ENCODE measurements at regions of chr5 and their contacts with region 1.

Region 1: GRCh38 chr5:123807177-123807945 is 295.4 kb downstream of the CSNK1G3 start:
- DNase-seq: no peak
- ATAC-seq: no peak
- H3K4me3 ChIP-seq: no peak overlapping the region
- H3K4me3 Mint-ChIP-seq: no peak overlapping the region
- H3K27ac ChIP-seq: no peak overlapping the region
- H3K27ac Mint-ChIP-seq: no peak overlapping the region
- H3K4me1 ChIP-seq: no peaks in the 10 kb centered on the region
- H3K4me1 Mint-ChIP-seq: no peaks in the 10 kb centered on the region
- H3K27me3 ChIP-seq: no peaks in the 10 kb centered on the region
- H3K27me3 Mint-ChIP-seq: no peaks in the 10 kb centered on the region
- CTCF ChIP-seq: no peak

Region 2: GRCh38 chr5:122385808-122386207 is 1421.6 kb before region 1 on chr5:
- CTCF ChIA-PET with region 1: no interaction called
- POLR2A ChIA-PET with region 1: no interaction called
- intact Hi-C with region 1: loop called in 1 of 2 experiments (anchors 10 kb)
- DNase-seq: no peak
- ATAC-seq: no peak
- H3K4me3 ChIP-seq: no peak overlapping the region
- H3K4me3 Mint-ChIP-seq: no peak overlapping the region
- H3K27ac ChIP-seq: no peak overlapping the region
- H3K27ac Mint-ChIP-seq: no peak overlapping the region
- H3K4me1 ChIP-seq: no peaks in the 10 kb centered on the region
- H3K4me1 Mint-ChIP-seq: no peaks in the 10 kb centered on the region
- H3K27me3 ChIP-seq: no peaks in the 10 kb centered on the region
- H3K27me3 Mint-ChIP-seq: no peaks in the 10 kb centered on the region
- CTCF ChIP-seq: no peak

Region 3: GRCh38 chr5:123511648-123512605 is 295.4 kb before region 1 on chr5 and contains the start of gene CSNK1G3:
- CTCF ChIA-PET with region 1: no interaction called
- POLR2A ChIA-PET with region 1: no interaction called
- intact Hi-C with region 1: no loop called
- DNase-seq: peak; percentile 80 to 96 (median 91)
- ATAC-seq: peak; percentile 80
- H3K4me3 ChIP-seq: peak within 1 kb of the TSS; percentile 89 to 93
- H3K4me3 Mint-ChIP-seq: peak within 1 kb of the TSS; percentile 99
- H3K27ac ChIP-seq: peak within 1 kb of the TSS; percentile 77 to 87
- H3K27ac Mint-ChIP-seq: peak within 1 kb of the TSS; percentile 98
- H3K4me1 ChIP-seq: peaks cover 33% of the 10 kb centered on the region
- H3K4me1 Mint-ChIP-seq: peaks cover 42% of the 10 kb centered on the region
- H3K27me3 ChIP-seq: no peaks in the 10 kb centered on the region
- H3K27me3 Mint-ChIP-seq: peaks cover 2% of the 10 kb centered on the region
- CTCF ChIP-seq: no peak
- total RNA-seq, gene CSNK1G3: 98.1 to 99.9 TPM